Naive thymus-derived CD4-positive, alpha-beta T cell (primary cell): ENCODE measurements at regions of chr22 and their contacts with region 1.

Region 1: GRCh38 chr22:40436505-40437451 is 66.4 kb downstream of the SGSM3 start:
- DNase-seq: peak in 7 of 9 donors; percentile 51 to 73 (median 65)
- ATAC-seq: peak; percentile 79
- H3K4me3 ChIP-seq: no peak overlapping the region
- H3K4me3 Mint-ChIP-seq: peak overlapping the region in 7 of 10 donors; percentile 7 to 73 (median 39)
- H3K27ac ChIP-seq: peak overlapping the region; percentile 24
- H3K27ac Mint-ChIP-seq: peak overlapping the region; percentile 0 to 88 (median 68)
- H3K4me1 ChIP-seq: peaks cover 10 to 23% of the 10 kb centered on the region in 2 donors
- H3K4me1 Mint-ChIP-seq: peaks cover 28 to 77% (median 62%) of the 10 kb centered on the region in 7 donors
- H3K27me3 ChIP-seq: no peaks in the 10 kb centered on the region
- H3K27me3 Mint-ChIP-seq: no peaks in the 10 kb centered on the region

Region 2: GRCh38 chr22:40203572-40203971 is 233.2 kb before region 1 on chr22:
- CTCF ChIA-PET with region 1: no interaction called
- POLR2A ChIA-PET with region 1: no interaction called
- intact Hi-C with region 1: no loop called
- DNase-seq: peak in 7 of 9 donors; percentile 46 to 72 (median 60)
- ATAC-seq: peak; percentile 93
- H3K4me3 ChIP-seq: peak overlapping the region; percentile 5
- H3K4me3 Mint-ChIP-seq: peak overlapping the region; percentile 60 to 73 (median 66)
- H3K27ac ChIP-seq: peak overlapping the region; percentile 54
- H3K27ac Mint-ChIP-seq: peak overlapping the region; percentile 74 to 95 (median 85)
- H3K4me1 ChIP-seq: peaks cover 24 to 49% of the 10 kb centered on the region in 2 donors
- H3K4me1 Mint-ChIP-seq: peaks cover 50 to 88% (median 79%) of the 10 kb centered on the region in 7 donors
- H3K27me3 ChIP-seq: no peaks in the 10 kb centered on the region
- H3K27me3 Mint-ChIP-seq: no peaks in the 10 kb centered on the region

Region 3: DNA sequence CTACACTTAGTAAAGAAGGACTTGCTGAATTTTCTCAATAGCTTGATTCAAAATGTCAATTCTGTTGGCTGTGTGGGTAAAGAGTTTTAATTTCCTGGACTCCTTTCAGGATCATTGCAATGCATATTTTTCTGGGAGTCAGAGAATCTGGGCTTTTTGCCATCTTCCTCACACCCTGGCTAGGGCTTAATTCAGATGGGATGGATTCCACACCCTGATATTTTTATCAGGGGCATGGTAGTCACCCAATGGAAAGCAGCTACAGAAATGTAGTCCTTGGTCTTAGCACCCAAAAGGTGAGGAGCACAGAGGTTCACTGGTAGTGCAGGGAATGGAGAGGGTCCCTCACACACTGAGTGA is 12.9 kb after region 1 on chr22:
- CTCF ChIA-PET with region 1: interaction called, 8 read pairs
- POLR2A ChIA-PET with region 1: interaction called, 16 read pairs
- intact Hi-C with region 1: loop called in 1 of 2 experiments (anchors 2 kb)
- DNase-seq: no peak
- ATAC-seq: no peak
- H3K4me3 ChIP-seq: no peak overlapping the region
- H3K4me3 Mint-ChIP-seq: peak overlapping the region in 8 of 10 donors; percentile 18 to 82 (median 72)
- H3K27ac ChIP-seq: no peak overlapping the region
- H3K27ac Mint-ChIP-seq: peak overlapping the region in 8 of 9 donors; percentile 51 to 96 (median 88)
- H3K4me1 ChIP-seq: peaks cover 19 to 62% of the 10 kb centered on the region in 2 donors
- H3K4me1 Mint-ChIP-seq: peaks cover 58 to 96% (median 85%) of the 10 kb centered on the region in 7 donors
- H3K27me3 ChIP-seq: no peaks in the 10 kb centered on the region
- H3K27me3 Mint-ChIP-seq: no peaks in the 10 kb centered on the region

Region 4: DNA sequence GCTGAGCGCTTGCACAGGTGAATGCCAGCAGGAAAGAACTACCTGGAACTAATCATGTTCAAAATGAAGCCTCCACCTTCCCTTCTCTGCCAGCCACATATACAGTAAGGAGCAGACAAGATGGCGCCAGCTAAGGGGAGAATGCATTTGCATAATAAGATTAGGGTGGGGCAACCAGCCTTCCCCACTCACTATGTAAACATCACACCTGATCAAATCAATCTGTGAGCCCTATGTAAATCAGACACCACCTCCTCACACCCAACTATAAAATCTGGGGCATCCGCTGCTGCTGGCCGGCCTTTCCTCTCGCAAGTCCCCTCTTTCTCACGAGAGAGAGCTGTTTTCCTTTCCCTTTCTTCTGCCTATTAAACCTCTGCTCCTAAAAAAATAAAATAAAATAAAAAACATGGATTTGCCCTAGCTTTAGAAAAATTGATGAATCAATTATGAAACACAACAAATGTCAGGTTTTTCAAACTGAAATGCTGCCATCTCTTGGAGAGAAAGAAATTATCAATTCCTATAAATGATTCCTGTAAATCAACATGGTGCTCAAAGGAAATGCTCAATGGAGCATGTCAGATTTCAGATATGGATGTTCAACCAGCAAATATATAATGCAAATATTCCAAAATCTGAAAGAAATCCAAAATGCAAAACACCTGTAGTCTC is 42.5 kb after region 1 on chr22:
- CTCF ChIA-PET with region 1: interaction called, 49 read pairs
- POLR2A ChIA-PET with region 1: interaction called, 6 read pairs
- intact Hi-C with region 1: loop called in 1 of 2 experiments (anchors 1 kb)
- DNase-seq: no peak
- ATAC-seq: no peak
- H3K4me3 ChIP-seq: no peak overlapping the region
- H3K4me3 Mint-ChIP-seq: no peak overlapping the region
- H3K27ac ChIP-seq: no peak overlapping the region
- H3K27ac Mint-ChIP-seq: peak overlapping the region in 2 of 9 donors; percentile 48 to 59
- H3K4me1 ChIP-seq: peaks cover 0 to 5% of the 10 kb centered on the region in 2 donors
- H3K4me1 Mint-ChIP-seq: peaks cover 31 to 60% (median 47%) of the 10 kb centered on the region in 7 donors
- H3K27me3 ChIP-seq: no peaks in the 10 kb centered on the region
- H3K27me3 Mint-ChIP-seq: no peaks in the 10 kb centered on the region

Region 5: DNA sequence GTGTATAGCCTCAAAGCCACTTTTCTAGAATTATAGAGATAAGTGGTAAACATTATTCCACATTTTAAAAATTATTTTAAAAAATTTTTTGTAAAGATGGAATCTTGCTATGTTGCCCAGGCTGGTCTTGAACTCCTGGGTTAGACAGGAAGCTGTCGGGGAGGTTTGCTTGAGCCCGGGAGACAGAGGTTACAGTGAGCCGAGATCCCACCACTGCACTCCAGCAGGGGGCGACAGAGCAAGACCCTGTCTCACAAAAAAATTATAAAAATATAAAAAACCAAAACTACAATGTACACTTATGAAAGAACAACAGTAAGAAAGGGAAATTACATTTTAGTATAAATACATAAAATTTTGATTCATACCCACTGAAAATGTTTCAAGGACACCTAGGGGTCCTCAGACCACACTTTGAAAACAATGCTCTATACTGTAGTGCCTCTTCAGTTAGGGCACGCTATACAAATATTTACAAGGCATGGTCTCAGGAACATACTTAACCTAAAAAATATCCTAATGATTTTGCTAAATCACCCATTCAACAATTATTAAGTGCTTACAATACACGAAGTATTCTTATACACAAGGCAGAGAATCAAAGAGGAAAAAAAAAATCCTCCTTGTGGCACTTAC is 88.6 kb after region 1 on chr22:
- CTCF ChIA-PET with region 1: interaction called, 4 read pairs
- POLR2A ChIA-PET with region 1: interaction called, 3 read pairs
- intact Hi-C with region 1: loop called in 1 of 2 experiments (anchors 1 kb)
- DNase-seq: peak; percentile 58 to 80 (median 76)
- ATAC-seq: peak; percentile 74
- H3K4me3 ChIP-seq: no peak overlapping the region
- H3K4me3 Mint-ChIP-seq: peak overlapping the region in 1 of 10 donors; percentile 48
- H3K27ac ChIP-seq: no peak overlapping the region
- H3K27ac Mint-ChIP-seq: peak overlapping the region in 8 of 9 donors; percentile 7 to 86 (median 58)
- H3K4me1 ChIP-seq: peaks cover 0 to 11% of the 10 kb centered on the region in 2 donors
- H3K4me1 Mint-ChIP-seq: peaks cover 13 to 55% (median 51%) of the 10 kb centered on the region in 7 donors
- H3K27me3 ChIP-seq: no peaks in the 10 kb centered on the region
- H3K27me3 Mint-ChIP-seq: no peaks in the 10 kb centered on the region

Region 6: GRCh38 chr22:40898850-40899357 is 462.1 kb after region 1 on chr22:
- CTCF ChIA-PET with region 1: interaction called, 5 read pairs
- POLR2A ChIA-PET with region 1: no interaction called
- intact Hi-C with region 1: loop called (anchors 1 kb)
- DNase-seq: peak in 7 of 9 donors; percentile 12 to 52 (median 37)
- ATAC-seq: peak; percentile 67
- H3K4me3 ChIP-seq: no peak overlapping the region
- H3K4me3 Mint-ChIP-seq: peak overlapping the region in 1 of 10 donors; percentile 28
- H3K27ac ChIP-seq: no peak overlapping the region
- H3K27ac Mint-ChIP-seq: peak overlapping the region in 2 of 9 donors; percentile 36 to 44
- H3K4me1 ChIP-seq: no peaks in the 10 kb centered on the region
- H3K4me1 Mint-ChIP-seq: peaks cover 4 to 9% (median 5%) of the 10 kb centered on the region in 7 donors
- H3K27me3 ChIP-seq: no peaks in the 10 kb centered on the region
- H3K27me3 Mint-ChIP-seq: no peaks in the 10 kb centered on the region